SK-N-SH (cell line): ENCODE measurements at regions of chr16 and their contacts with region 1.

Region 1: DNA sequence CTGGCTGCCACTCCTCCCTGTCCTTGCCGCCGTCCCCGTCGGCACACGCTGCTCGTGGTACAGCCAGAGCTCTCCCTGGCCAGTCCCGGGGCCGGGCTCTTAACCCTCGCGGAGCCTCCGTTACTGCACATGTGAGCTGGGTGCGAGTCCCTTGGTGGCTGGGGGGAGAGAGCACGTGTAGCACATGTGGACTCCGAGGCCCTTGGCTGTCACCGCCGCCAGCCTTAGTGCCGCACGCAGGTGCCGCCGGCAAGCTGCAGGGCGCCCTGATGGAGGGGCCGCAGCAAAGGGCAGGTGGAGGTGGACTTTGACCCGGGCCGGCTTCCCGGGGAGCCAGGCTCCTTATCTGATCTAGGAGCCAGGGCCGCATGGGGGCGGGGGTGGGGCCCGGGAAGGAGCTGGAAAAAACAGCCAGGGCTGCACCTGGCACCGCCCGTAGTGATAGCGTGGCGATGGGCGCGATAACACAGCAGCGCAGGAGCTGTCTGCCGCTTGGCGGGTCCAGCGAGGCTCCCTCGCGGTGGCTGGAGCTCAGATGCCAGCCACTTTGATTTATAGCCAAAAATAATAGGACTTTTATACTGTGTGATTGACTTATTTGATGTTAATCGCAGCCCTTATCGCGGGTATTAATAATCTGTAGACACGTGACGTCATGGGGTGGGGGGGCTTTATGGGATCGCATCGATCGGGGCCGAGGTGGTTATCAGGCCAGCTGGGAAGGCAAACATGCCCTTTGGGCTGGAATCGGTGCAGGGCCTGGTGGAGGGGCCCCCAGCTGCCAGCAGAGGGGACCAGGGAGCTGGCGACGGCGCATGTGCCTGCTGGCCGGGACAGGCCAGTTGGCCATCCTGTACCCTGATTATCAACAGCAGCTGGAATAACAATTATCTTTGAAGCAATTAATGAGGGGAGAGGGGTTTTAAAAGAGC is 35.1 kb downstream of the ZFPM1 start:
- DNase-seq: peak; percentile 91
- H3K4me3 ChIP-seq: no peak overlapping the region
- H3K27ac ChIP-seq: peak overlapping the region in 1 of 2 experiments; percentile 63; a peak in 2 of 4 replicates
- H3K4me1 ChIP-seq: peaks cover 0 to 28% of the 10 kb centered on the region in 2 experiments; a peak in 1 of 4 replicates
- H3K27me3 ChIP-seq: no peaks in the 10 kb centered on the region
- CTCF ChIP-seq: no peak
- EP300 ChIP-seq: peak in 1 of 2 experiments; percentile 61; a peak in 2 of 4 replicates
- RAD21 ChIP-seq: peak; percentile 61

Region 2: GRCh38 chr16:88452482-88453216 is 35.5 kb before region 1 on chr16:
- CTCF ChIA-PET with region 1: interaction called, 16 read pairs
- POLR2A ChIA-PET with region 1: interaction called, 3 read pairs
- DNase-seq: peak; percentile 98
- H3K4me3 ChIP-seq: peak overlapping the region; percentile 57 to 75
- H3K27ac ChIP-seq: peak overlapping the region; percentile 56 to 86; a peak in 3 of 4 replicates
- H3K4me1 ChIP-seq: peaks cover 13 to 61% of the 10 kb centered on the region in 2 experiments; a peak in 3 of 4 replicates
- H3K27me3 ChIP-seq: no peaks in the 10 kb centered on the region
- CTCF ChIP-seq: no peak
- EP300 ChIP-seq: no peak
- RAD21 ChIP-seq: no peak

Region 3: DNA sequence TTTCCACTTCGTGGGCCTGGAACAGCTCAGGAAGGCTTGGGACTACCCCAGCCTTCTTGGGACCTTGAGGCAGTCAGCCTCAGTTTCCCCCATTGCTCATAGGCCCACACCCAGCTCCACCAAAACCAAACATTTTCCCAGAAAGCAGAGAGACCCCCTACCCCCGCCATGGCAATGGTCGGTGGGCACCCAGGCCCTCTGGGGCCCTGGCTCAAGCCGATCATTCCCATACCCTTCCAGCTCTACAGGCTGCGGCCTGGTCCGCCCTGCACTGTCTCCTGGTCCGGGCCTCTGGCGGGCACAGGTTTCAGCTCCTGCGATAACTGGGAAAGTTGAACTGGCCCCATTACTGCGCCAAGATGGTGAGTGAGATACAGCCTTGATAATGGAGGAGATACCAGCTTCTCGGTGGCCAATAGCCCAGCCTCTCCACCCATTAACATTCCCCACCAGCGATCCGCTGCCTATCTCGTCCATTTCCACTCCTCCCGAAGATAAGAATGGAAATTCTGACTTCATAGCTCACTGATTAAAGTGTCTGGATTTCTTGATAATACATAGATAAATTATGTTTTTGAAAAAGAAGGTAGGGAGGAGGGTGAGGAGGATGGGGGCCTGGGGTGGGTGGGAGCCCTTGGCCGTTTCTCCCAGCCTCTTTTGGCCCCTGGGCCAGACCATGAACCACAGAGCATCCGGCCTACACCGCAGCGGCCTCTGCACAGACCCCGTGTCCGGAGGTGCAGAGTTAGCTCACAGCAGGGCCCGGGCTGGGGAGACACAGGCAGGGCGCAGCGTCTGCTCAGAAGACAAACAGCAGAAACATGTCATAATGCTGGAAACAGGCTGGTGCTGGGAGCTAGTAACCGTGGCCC is 23.5 kb before region 1 on chr16:
- CTCF ChIA-PET with region 1: interaction called, 12 read pairs
- POLR2A ChIA-PET with region 1: interaction called, 3 read pairs
- DNase-seq: peak; percentile 90
- H3K4me3 ChIP-seq: no peak overlapping the region
- H3K27ac ChIP-seq: peak overlapping the region; percentile 60 to 98; a peak in 3 of 4 replicates
- H3K4me1 ChIP-seq: peaks cover 0 to 94% of the 10 kb centered on the region in 2 experiments; a peak in 2 of 4 replicates
- H3K27me3 ChIP-seq: no peaks in the 10 kb centered on the region
- CTCF ChIP-seq: no peak
- EP300 ChIP-seq: peak in 1 of 2 experiments; percentile 64; a peak in 2 of 4 replicates
- RAD21 ChIP-seq: peak; percentile 8; the same call in 1 of the 2 replicates

Region 4: DNA sequence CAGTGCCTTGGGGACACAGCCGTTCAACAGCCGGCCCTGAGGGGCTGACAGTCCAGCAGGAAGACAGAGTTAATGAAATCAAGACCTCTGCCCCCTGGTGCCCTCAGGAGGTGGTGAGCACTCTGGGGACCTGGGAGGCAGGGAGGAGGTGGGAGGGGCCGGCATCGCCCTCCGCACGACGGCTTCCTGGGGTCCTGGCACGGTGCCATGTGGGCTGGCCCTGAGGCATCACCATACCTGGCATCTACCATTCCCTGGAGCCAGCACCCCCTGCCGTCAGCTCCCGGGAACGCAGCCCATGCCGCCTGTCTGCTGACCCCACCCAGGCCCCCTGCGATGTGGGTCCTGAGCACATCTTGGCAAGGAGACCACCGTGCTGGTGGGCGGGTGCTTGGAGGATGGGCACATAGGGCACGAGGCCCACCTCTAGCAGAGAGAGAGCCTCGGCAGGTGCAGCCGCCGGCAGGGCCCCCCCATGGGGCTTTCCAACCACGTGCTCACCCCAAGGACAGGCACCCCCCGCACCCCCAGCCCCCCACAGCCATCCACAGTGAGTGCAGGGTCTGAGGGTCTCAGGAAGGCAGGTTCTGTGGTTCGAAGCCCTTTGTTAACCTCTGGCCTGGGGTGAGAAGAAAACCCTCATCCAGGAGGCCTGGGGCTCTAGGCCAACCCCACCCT is 17.4 kb after region 1 on chr16:
- CTCF ChIA-PET with region 1: interaction called, 29 read pairs
- POLR2A ChIA-PET with region 1: no interaction called
- DNase-seq: peak; percentile 90
- H3K4me3 ChIP-seq: no peak overlapping the region
- H3K27ac ChIP-seq: peak overlapping the region in 1 of 2 experiments; percentile 79; a peak in 2 of 4 replicates
- H3K4me1 ChIP-seq: peaks cover 0 to 44% of the 10 kb centered on the region in 2 experiments; a peak in 1 of 4 replicates
- H3K27me3 ChIP-seq: no peaks in the 10 kb centered on the region
- CTCF ChIP-seq: peak; percentile 56
- EP300 ChIP-seq: no peak
- RAD21 ChIP-seq: no peak

Region 5: DNA sequence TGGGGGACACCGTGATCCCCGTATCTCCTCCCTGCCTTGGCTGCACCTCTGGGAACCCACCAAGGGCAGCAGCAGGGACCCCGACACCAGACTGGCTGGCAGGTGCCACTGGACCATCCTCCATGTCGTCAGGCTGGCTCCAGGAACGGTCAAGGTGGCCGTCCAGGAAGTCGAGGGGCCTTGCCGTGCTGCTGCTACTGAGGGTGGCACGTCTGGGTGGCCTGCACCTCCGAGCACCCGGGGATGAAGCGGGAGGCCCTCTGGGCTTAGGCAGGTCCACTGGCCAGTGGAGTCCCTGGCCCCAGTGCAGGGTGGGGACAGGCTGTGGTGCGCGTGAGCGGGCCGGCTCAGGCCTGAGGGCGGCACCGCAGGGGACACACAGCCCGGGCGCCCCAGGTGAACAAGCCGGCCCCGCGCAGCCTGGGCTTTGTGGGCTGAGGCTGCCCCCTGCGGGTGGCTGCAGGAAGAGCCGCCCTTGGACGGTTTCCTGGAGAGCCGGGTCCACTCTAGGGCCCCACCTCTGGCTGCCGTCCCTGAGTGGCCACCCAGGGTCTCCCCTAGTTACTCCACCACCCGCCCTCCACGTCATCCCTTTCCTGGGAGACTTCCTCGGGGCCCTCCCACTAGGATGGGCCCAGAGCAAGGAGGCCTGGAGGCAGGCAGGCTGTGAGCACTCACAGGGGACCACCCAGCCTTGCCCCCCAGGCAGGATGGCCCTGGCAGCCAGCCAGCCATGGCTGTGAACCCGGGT is 39.2 kb after region 1 on chr16:
- CTCF ChIA-PET with region 1: interaction called, 12 read pairs
- POLR2A ChIA-PET with region 1: no interaction called
- DNase-seq: peak; percentile 95
- H3K4me3 ChIP-seq: peak overlapping the region in 1 of 2 experiments; percentile 48; a peak in 1 of 4 replicates
- H3K27ac ChIP-seq: peak overlapping the region in 1 of 2 experiments; percentile 22; a peak in 1 of 4 replicates
- H3K4me1 ChIP-seq: peaks cover 0 to 9% of the 10 kb centered on the region in 2 experiments; a peak in 1 of 4 replicates
- H3K27me3 ChIP-seq: no peaks in the 10 kb centered on the region
- CTCF ChIP-seq: peak; percentile 69
- EP300 ChIP-seq: no peak
- RAD21 ChIP-seq: peak; percentile 89

Region 6: GRCh38 chr16:88561485-88562369 is 73.5 kb after region 1 on chr16:
- CTCF ChIA-PET with region 1: interaction called, 26 read pairs
- POLR2A ChIA-PET with region 1: no interaction called
- DNase-seq: peak; percentile 91
- H3K4me3 ChIP-seq: no peak overlapping the region; a peak in 1 of 4 replicates
- H3K27ac ChIP-seq: no peak overlapping the region
- H3K4me1 ChIP-seq: peaks cover 0 to 8% of the 10 kb centered on the region in 2 experiments; a peak in 1 of 4 replicates
- H3K27me3 ChIP-seq: peaks cover 16% of the 10 kb centered on the region; the same call in 1 of the 2 replicates
- CTCF ChIP-seq: peak; percentile 61
- EP300 ChIP-seq: no peak
- RAD21 ChIP-seq: peak; percentile 80